ENCODE measurements at regions of chr11 and their contacts with region 1.

Region 1: DNA sequence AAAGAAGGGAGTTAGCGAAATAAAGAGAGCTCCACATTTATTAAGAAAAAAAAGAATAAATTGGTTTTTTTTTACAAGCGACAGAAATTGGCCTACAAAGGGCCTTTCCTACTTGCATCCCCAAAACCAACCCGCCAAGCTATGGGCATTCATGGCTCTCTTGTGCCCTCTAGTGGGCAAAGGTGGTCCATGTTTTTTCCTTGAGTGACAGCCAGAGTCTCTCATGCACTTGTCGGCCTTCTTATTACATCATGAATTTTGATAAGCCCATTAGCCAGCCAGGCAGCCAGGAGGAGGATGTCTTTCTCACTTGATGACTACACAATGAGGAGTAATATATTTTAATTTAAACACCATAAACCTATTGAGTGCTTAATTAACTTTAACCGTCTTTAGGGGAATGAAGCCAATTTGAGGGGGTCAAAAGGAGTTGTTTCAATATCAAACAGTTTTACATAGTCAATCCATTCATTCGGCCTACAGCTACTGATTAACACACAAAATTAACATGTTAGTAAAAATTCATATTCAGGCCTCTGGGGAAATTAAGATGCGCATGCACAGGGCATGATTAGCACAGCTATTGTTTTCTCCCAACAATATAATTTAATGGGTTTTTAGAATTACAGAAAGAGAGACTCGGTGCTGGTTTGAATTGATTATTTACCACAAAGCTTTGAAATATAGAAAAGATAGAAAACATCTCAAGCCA is 85.5 kb downstream of the RCN1 start:
- DNase-seq: peak; percentile 63 to 85 (median 75)
- ATAC-seq: peak; percentile 58
- H3K4me3 ChIP-seq: no peak overlapping the region
- H3K4me3 Mint-ChIP-seq: no peak overlapping the region
- H3K27ac ChIP-seq: no peak overlapping the region
- H3K27ac Mint-ChIP-seq: no peak overlapping the region
- H3K4me1 ChIP-seq: no peaks in the 10 kb centered on the region
- H3K4me1 Mint-ChIP-seq: peaks cover 4% of the 10 kb centered on the region
- H3K27me3 ChIP-seq: no peaks in the 10 kb centered on the region
- H3K27me3 Mint-ChIP-seq: peaks cover 10% of the 10 kb centered on the region
- CTCF ChIP-seq: peak; percentile 95

Region 2: GRCh38 chr11:30346068-30346688 is 1830.2 kb before region 1 on chr11:
- CTCF ChIA-PET with region 1: interaction called, 3 read pairs
- POLR2A ChIA-PET with region 1: no interaction called
- intact Hi-C with region 1: loop called (anchors 5 kb)
- DNase-seq: peak in 2 of 9 experiments; percentile 65 to 75
- ATAC-seq: peak; percentile 58
- H3K4me3 ChIP-seq: no peak overlapping the region
- H3K4me3 Mint-ChIP-seq: no peak overlapping the region
- H3K27ac ChIP-seq: no peak overlapping the region
- H3K27ac Mint-ChIP-seq: no peak overlapping the region
- H3K4me1 ChIP-seq: peaks cover 17% of the 10 kb centered on the region
- H3K4me1 Mint-ChIP-seq: peaks cover 16% of the 10 kb centered on the region
- H3K27me3 ChIP-seq: no peaks in the 10 kb centered on the region
- H3K27me3 Mint-ChIP-seq: no peaks in the 10 kb centered on the region
- CTCF ChIP-seq: peak; percentile 78

Region 3: DNA sequence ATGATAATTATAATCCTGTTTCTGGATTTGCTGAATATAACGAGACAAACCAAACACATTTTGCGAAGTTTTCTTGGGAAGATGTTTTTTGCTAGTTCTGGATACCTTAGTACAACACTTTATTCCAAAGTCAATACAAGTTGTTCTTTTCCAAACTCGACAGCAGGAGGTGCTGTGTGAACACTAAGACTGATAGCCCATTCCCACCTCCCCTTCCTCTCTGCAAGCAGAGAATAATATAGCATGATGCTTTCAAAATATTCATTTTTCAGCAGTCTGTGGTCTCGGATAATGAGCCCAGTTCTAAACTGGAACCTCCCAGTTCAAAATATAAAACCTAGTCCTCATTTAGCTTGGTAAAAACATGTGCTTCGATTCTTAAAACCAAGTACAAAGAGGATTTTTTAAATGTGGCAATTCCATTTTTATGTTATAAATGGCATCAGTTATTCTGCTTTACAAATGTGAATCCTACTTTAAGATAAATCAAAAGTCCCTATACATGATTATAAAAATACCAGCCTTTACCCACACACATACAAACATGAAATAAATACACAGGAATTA is 936.0 kb before region 1 on chr11:
- CTCF ChIA-PET with region 1: interaction called, 10 read pairs
- POLR2A ChIA-PET with region 1: no interaction called
- intact Hi-C with region 1: loop called (anchors 1 to 2 kb)
- DNase-seq: peak in 4 of 9 experiments; percentile 4 to 49 (median 22)
- ATAC-seq: no peak
- H3K4me3 ChIP-seq: no peak overlapping the region
- H3K4me3 Mint-ChIP-seq: no peak overlapping the region
- H3K27ac ChIP-seq: no peak overlapping the region
- H3K27ac Mint-ChIP-seq: no peak overlapping the region
- H3K4me1 ChIP-seq: no peaks in the 10 kb centered on the region
- H3K4me1 Mint-ChIP-seq: no peaks in the 10 kb centered on the region
- H3K27me3 ChIP-seq: no peaks in the 10 kb centered on the region
- H3K27me3 Mint-ChIP-seq: peaks cover 4% of the 10 kb centered on the region
- CTCF ChIP-seq: peak; percentile 58

Region 4: GRCh38 chr11:31397239-31397834 is 779.0 kb before region 1 on chr11:
- CTCF ChIA-PET with region 1: interaction called, 3 read pairs
- POLR2A ChIA-PET with region 1: no interaction called
- intact Hi-C with region 1: loop called in 1 of 2 experiments (anchors 1 kb)
- DNase-seq: peak in 2 of 9 experiments; percentile 22 to 48
- ATAC-seq: no peak
- H3K4me3 ChIP-seq: no peak overlapping the region
- H3K4me3 Mint-ChIP-seq: no peak overlapping the region
- H3K27ac ChIP-seq: no peak overlapping the region
- H3K27ac Mint-ChIP-seq: no peak overlapping the region
- H3K4me1 ChIP-seq: no peaks in the 10 kb centered on the region
- H3K4me1 Mint-ChIP-seq: no peaks in the 10 kb centered on the region
- H3K27me3 ChIP-seq: no peaks in the 10 kb centered on the region
- H3K27me3 Mint-ChIP-seq: no peaks in the 10 kb centered on the region
- CTCF ChIP-seq: peak; percentile 61

Region 5: GRCh38 chr11:32052218-32052617 is 124.2 kb before region 1 on chr11:
- CTCF ChIA-PET with region 1: interaction called, 184 read pairs
- POLR2A ChIA-PET with region 1: interaction called, 6 read pairs
- intact Hi-C with region 1: loop called (anchors 1 kb)
- DNase-seq: peak; percentile 8 to 70 (median 53)
- ATAC-seq: no peak
- H3K4me3 ChIP-seq: no peak overlapping the region
- H3K4me3 Mint-ChIP-seq: no peak overlapping the region
- H3K27ac ChIP-seq: no peak overlapping the region
- H3K27ac Mint-ChIP-seq: no peak overlapping the region
- H3K4me1 ChIP-seq: no peaks in the 10 kb centered on the region
- H3K4me1 Mint-ChIP-seq: no peaks in the 10 kb centered on the region
- H3K27me3 ChIP-seq: peaks cover 0 to 5% of the 10 kb centered on the region in 2 experiments
- H3K27me3 Mint-ChIP-seq: peaks cover 16% of the 10 kb centered on the region
- CTCF ChIP-seq: peak; percentile 65

Region 6: GRCh38 chr11:32100495-32100894 is 75.9 kb before region 1 on chr11:
- CTCF ChIA-PET with region 1: no interaction called
- POLR2A ChIA-PET with region 1: no interaction called
- intact Hi-C with region 1: no loop called
- DNase-seq: no peak
- ATAC-seq: no peak
- H3K4me3 ChIP-seq: no peak overlapping the region
- H3K4me3 Mint-ChIP-seq: no peak overlapping the region
- H3K27ac ChIP-seq: no peak overlapping the region
- H3K27ac Mint-ChIP-seq: no peak overlapping the region
- H3K4me1 ChIP-seq: no peaks in the 10 kb centered on the region
- H3K4me1 Mint-ChIP-seq: peaks cover 11% of the 10 kb centered on the region
- H3K27me3 ChIP-seq: no peaks in the 10 kb centered on the region
- H3K27me3 Mint-ChIP-seq: no peaks in the 10 kb centered on the region
- CTCF ChIP-seq: no peak

Region 7: GRCh38 chr11:32154275-32154674 is 22.1 kb before region 1 on chr11:
- CTCF ChIA-PET with region 1: interaction called, 16 read pairs
- POLR2A ChIA-PET with region 1: no interaction called
- intact Hi-C with region 1: no loop called
- DNase-seq: peak in 2 of 9 experiments; percentile 43 to 55
- ATAC-seq: no peak
- H3K4me3 ChIP-seq: no peak overlapping the region
- H3K4me3 Mint-ChIP-seq: no peak overlapping the region
- H3K27ac ChIP-seq: no peak overlapping the region
- H3K27ac Mint-ChIP-seq: no peak overlapping the region
- H3K4me1 ChIP-seq: no peaks in the 10 kb centered on the region
- H3K4me1 Mint-ChIP-seq: no peaks in the 10 kb centered on the region
- H3K27me3 ChIP-seq: no peaks in the 10 kb centered on the region
- H3K27me3 Mint-ChIP-seq: peaks cover 22% of the 10 kb centered on the region
- CTCF ChIP-seq: no peak

Region 8: GRCh38 chr11:32200136-32200847 is 23.9 kb after region 1 on chr11:
- CTCF ChIA-PET with region 1: interaction called, 13 read pairs
- POLR2A ChIA-PET with region 1: no interaction called
- intact Hi-C with region 1: no loop called
- DNase-seq: no peak
- ATAC-seq: no peak
- H3K4me3 ChIP-seq: no peak overlapping the region
- H3K4me3 Mint-ChIP-seq: no peak overlapping the region
- H3K27ac ChIP-seq: no peak overlapping the region
- H3K27ac Mint-ChIP-seq: no peak overlapping the region
- H3K4me1 ChIP-seq: no peaks in the 10 kb centered on the region
- H3K4me1 Mint-ChIP-seq: no peaks in the 10 kb centered on the region
- H3K27me3 ChIP-seq: no peaks in the 10 kb centered on the region
- H3K27me3 Mint-ChIP-seq: peaks cover 4% of the 10 kb centered on the region
- CTCF ChIP-seq: no peak